Activated CD4-positive, alpha-beta memory T cell treated with anti-CD3 and anti-CD28 coated beads for 36 hours (primary cell): ENCODE measurements at regions of chr6 and their contacts with region 1.

Region 1: GRCh38 chr6:134822920-134823709 is 126.8 kb downstream of the ALDH8A1 start:
- DNase-seq: peak; percentile 29
- H3K4me3 Mint-ChIP-seq: no peak overlapping the region
- H3K27ac Mint-ChIP-seq: no peak overlapping the region
- H3K4me1 Mint-ChIP-seq: no peaks in the 10 kb centered on the region
- H3K27me3 Mint-ChIP-seq: peaks cover 3% of the 10 kb centered on the region

Region 2: DNA sequence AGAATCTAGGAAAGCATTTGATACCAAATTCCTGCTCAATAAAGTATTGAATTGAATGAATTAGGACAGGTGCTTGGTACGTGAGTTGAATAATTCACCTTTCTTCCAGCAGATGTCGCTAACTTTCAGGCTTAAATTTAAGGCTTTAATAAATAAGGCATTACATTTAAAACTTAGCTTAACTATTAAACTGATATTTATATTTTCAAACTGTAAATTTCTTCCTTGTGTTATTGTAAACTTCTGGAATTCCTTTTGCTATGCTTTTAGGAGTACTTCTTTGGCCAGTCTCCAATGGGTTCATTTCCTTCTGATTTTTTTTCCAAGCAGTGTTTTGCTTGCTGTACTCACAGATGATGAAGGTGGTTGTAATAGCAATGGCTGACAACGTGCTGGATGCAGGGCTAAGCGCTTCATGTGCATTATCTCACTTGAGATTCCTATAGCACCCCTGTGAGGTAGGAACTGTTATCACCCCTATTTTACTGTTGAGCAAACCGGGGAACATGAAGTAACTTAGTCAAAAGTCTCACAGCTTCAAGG is 699.4 kb before region 1 on chr6:
- CTCF ChIA-PET with region 1: interaction called, 30 read pairs
- POLR2A ChIA-PET with region 1: no interaction called
- intact Hi-C with region 1: loop called (anchors 1 kb)
- DNase-seq: no peak
- H3K4me3 Mint-ChIP-seq: no peak overlapping the region
- H3K27ac Mint-ChIP-seq: no peak overlapping the region
- H3K4me1 Mint-ChIP-seq: no peaks in the 10 kb centered on the region
- H3K27me3 Mint-ChIP-seq: no peaks in the 10 kb centered on the region

Region 3: DNA sequence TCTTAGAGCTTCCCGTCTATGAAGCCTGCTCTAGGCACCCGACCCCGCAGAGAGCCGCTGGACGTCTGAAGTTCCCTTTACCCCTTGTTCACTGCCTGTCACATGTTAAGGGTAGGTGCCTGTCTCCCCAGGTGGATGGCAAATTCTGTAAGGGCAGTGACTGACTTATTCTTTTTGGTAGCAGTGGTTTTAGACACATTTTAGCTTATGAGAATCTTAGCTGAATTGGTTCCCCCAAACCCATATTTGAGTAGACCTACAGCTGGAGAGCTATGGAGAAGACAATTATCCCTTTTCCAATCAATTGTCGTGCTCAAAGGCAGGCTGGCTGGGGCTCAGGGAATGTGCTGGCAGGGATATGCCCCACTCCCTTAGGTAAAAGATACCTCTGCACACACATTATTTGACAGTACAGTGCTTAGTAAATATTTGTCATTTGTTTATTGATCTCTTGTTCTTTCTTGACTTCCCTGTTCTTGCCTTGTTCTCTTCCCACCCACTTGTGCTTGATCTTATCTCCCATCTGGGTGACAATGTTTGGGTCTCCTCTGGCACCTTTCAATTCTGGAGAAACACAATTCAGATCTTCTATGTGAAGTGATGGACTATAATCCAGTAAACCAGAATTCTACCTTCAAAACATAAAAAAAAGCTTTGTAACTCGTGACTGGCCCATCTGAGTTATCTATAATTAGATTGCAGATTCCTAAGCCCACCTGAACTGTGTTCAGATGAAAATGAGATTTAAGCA is 656.4 kb before region 1 on chr6:
- CTCF ChIA-PET with region 1: interaction called, 72 read pairs
- POLR2A ChIA-PET with region 1: no interaction called
- intact Hi-C with region 1: no loop called
- DNase-seq: no peak
- H3K4me3 Mint-ChIP-seq: no peak overlapping the region
- H3K27ac Mint-ChIP-seq: no peak overlapping the region
- H3K4me1 Mint-ChIP-seq: peaks cover 21% of the 10 kb centered on the region
- H3K27me3 Mint-ChIP-seq: no peaks in the 10 kb centered on the region

Region 4: GRCh38 chr6:134647861-134648260 is 175.3 kb before region 1 on chr6:
- CTCF ChIA-PET with region 1: no interaction called
- POLR2A ChIA-PET with region 1: no interaction called
- intact Hi-C with region 1: no loop called
- DNase-seq: no peak
- H3K4me3 Mint-ChIP-seq: no peak overlapping the region
- H3K27ac Mint-ChIP-seq: no peak overlapping the region
- H3K4me1 Mint-ChIP-seq: no peaks in the 10 kb centered on the region
- H3K27me3 Mint-ChIP-seq: peaks cover 3% of the 10 kb centered on the region

Region 5: GRCh38 chr6:134797400-134798113 is 25.6 kb before region 1 on chr6:
- CTCF ChIA-PET with region 1: no interaction called
- POLR2A ChIA-PET with region 1: no interaction called
- intact Hi-C with region 1: no loop called
- DNase-seq: no peak
- H3K4me3 Mint-ChIP-seq: no peak overlapping the region
- H3K27ac Mint-ChIP-seq: no peak overlapping the region
- H3K4me1 Mint-ChIP-seq: no peaks in the 10 kb centered on the region
- H3K27me3 Mint-ChIP-seq: peaks cover 3% of the 10 kb centered on the region

Region 6: DNA sequence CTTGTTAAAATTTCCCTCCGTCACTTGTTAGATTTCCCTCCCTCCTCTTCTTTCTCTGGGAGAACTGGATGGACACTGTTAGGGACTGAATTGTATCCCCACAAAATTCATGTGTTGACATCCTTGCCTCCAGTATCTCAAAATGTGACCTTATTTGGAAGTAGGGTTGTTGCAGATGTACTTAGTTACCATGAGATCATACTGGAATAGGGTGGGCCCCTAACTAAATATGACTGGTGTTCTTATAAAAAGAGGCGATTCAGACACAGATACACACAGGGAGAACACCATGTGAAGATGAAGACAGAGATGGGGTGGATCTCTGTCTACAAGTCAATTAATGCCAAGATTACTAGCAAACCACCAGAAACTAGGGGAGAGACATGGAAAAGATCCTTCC is 12.7 kb before region 1 on chr6:
- CTCF ChIA-PET with region 1: interaction called, 10 read pairs
- POLR2A ChIA-PET with region 1: no interaction called
- intact Hi-C with region 1: no loop called
- DNase-seq: no peak
- H3K4me3 Mint-ChIP-seq: no peak overlapping the region
- H3K27ac Mint-ChIP-seq: no peak overlapping the region
- H3K4me1 Mint-ChIP-seq: no peaks in the 10 kb centered on the region
- H3K27me3 Mint-ChIP-seq: peaks cover 5% of the 10 kb centered on the region

Region 7: GRCh38 chr6:134863771-134864510 is 40.8 kb after region 1 on chr6:
- CTCF ChIA-PET with region 1: no interaction called
- POLR2A ChIA-PET with region 1: no interaction called
- intact Hi-C with region 1: no loop called
- DNase-seq: no peak
- H3K4me3 Mint-ChIP-seq: no peak overlapping the region
- H3K27ac Mint-ChIP-seq: no peak overlapping the region
- H3K4me1 Mint-ChIP-seq: no peaks in the 10 kb centered on the region
- H3K27me3 Mint-ChIP-seq: peaks cover 1% of the 10 kb centered on the region

Region 8: DNA sequence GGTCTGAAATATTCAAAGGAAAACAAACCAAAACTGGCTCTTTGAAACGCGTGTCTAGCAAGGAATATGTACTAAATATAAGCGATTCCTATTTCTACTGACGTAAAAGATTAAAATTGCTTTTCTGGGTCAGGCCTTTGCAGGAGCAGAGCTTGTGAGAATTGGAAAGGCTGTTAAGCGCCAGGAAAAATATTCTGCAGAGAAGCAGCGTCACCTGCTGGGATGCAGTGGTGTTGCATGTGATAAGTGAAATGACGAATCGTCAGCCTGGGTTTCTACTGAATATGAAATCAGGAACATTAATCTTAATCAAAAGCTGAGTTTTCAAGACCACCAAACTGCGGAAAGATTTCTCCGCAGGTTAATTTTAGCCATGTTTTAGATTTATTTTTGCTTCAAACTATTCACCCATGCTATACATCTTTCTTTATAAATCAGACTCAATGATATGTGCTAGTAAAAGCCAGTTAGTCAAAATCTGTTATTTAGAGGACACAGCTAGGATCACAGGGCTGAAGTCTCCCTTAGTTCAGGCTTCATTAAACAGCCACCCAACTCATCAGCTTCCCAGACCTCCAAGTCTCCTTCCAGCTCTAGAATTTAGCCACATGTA is 59.4 kb after region 1 on chr6:
- CTCF ChIA-PET with region 1: interaction called, 4 read pairs
- POLR2A ChIA-PET with region 1: no interaction called
- intact Hi-C with region 1: loop called (anchors 1 kb)
- DNase-seq: peak; percentile 74
- H3K4me3 Mint-ChIP-seq: no peak overlapping the region
- H3K27ac Mint-ChIP-seq: no peak overlapping the region
- H3K4me1 Mint-ChIP-seq: no peaks in the 10 kb centered on the region
- H3K27me3 Mint-ChIP-seq: peaks cover 18% of the 10 kb centered on the region